A549 (cell line): ENCODE measurements at regions of chr11 and their contacts with region 1.

Region 1: GRCh38 chr11:62612366-62613290 is at the starts of genes EML3 and ROM1:
- DNase-seq: peak; percentile 88
- ATAC-seq: peak; percentile 65 to 82
- H3K4me3 ChIP-seq: peak within 1 kb of the TSS; percentile 61
- H3K27ac ChIP-seq: peak within 1 kb of the TSS; percentile 80 to 98
- H3K4me1 ChIP-seq: peaks cover 29% of the 10 kb centered on the region
- CTCF ChIP-seq: peak; percentile 100
- EP300 ChIP-seq: no peak
- POLR2A ChIP-seq: no peak
- RAD21 ChIP-seq: peak in 1 of 2 experiments; percentile 59; a peak in 3 of 5 replicates
- polyA plus RNA-seq, gene EML3: 15.2 and 19.7 TPM in 2 replicates
- polyA plus RNA-seq, gene ROM1: 0.92 and 1.6 TPM in 2 replicates

Region 2: GRCh38 chr11:62601394-62602140 is 11.1 kb before region 1 on chr11 and contains the start of gene MTA2:
- CTCF ChIA-PET with region 1: interaction called, 42 read pairs
- POLR2A ChIA-PET with region 1: interaction called, 5 read pairs
- DNase-seq: peak; percentile 87 to 98
- ATAC-seq: peak; percentile 86 to 92
- H3K4me3 ChIP-seq: peak within 1 kb of the TSS; percentile 92
- H3K27ac ChIP-seq: peak within 1 kb of the TSS; percentile 95 to 98
- H3K4me1 ChIP-seq: peaks cover 32% of the 10 kb centered on the region
- CTCF ChIP-seq: no peak
- EP300 ChIP-seq: no peak
- POLR2A ChIP-seq: peak; percentile 22; the same call in 1 of the 2 replicates
- RAD21 ChIP-seq: no peak
- polyA plus RNA-seq, gene MTA2: 21.8 and 44.3 TPM in 2 replicates

Region 3: DNA sequence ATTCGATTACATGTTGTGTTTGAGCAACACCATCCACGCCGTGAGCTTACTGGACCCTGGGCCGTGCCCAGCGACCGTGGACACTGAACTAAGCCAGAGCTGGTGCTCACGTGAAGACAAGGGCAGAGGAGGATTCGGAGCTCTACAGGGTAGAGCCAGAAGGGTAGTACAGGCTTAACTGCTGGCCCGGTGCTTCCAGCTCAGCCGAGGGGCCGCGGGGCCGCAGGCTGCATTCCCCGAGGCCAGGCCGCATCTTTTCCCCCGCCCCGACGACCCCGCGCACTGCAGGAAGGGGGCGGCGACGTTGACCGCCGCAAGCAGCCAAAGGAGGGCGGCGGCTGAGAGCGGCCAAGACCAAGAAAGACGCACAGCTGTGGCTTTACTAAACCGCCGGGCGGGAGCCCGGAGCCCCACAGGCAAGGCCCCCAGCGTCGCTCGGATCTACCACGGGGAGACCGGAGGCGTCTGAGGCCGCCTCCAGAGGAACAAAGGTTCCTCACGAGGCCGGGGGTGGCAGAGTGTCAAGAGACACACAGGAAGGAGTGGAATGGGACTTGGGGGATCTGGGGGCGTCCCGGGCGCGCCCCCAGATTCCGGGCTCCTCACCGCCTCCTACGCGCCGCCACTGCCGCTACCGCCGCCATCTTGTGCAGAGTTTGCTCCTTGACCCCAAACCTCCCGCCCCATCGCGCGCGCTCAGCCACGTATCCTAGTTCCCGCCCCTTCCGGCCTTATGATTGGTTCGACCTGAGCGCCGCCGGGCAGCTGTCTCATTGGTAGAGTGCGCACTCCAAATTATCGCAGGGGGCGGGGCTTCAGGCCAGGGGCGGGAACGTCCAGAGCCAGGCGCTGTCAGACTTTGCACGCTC is 33.6 kb after region 1 on chr11 and contains the start of gene GANAB:
- CTCF ChIA-PET with region 1: interaction called, 15 read pairs
- POLR2A ChIA-PET with region 1: interaction called, 4 read pairs
- DNase-seq: peak; percentile 97 to 99
- ATAC-seq: peak; percentile 97 to 99
- H3K4me3 ChIP-seq: peak within 1 kb of the TSS; percentile 79
- H3K27ac ChIP-seq: peak within 1 kb of the TSS; percentile 94 to 97
- H3K4me1 ChIP-seq: peaks cover 11% of the 10 kb centered on the region
- CTCF ChIP-seq: no peak
- EP300 ChIP-seq: no peak
- POLR2A ChIP-seq: peak; percentile 89
- RAD21 ChIP-seq: no peak
- polyA plus RNA-seq, gene GANAB: 215 and 308 TPM in 2 replicates

Region 4: GRCh38 chr11:62652161-62653006 is 39.8 kb after region 1 on chr11:
- CTCF ChIA-PET with region 1: interaction called, 15 read pairs
- POLR2A ChIA-PET with region 1: no interaction called
- DNase-seq: no peak
- ATAC-seq: peak in 1 of 2 experiments; percentile 60; a peak in 3 of 6 replicates
- H3K4me3 ChIP-seq: peak overlapping the region; percentile 75
- H3K27ac ChIP-seq: peak overlapping the region; percentile 85 to 97
- H3K4me1 ChIP-seq: peaks cover 10% of the 10 kb centered on the region; the same call in 2 of the 3 replicates
- CTCF ChIP-seq: no peak
- EP300 ChIP-seq: no peak
- POLR2A ChIP-seq: no peak
- RAD21 ChIP-seq: no peak